Colonic mucosa (tissue), 4 donors: ENCODE measurements at regions of chr1 and their contacts with region 1.

Region 1: DNA sequence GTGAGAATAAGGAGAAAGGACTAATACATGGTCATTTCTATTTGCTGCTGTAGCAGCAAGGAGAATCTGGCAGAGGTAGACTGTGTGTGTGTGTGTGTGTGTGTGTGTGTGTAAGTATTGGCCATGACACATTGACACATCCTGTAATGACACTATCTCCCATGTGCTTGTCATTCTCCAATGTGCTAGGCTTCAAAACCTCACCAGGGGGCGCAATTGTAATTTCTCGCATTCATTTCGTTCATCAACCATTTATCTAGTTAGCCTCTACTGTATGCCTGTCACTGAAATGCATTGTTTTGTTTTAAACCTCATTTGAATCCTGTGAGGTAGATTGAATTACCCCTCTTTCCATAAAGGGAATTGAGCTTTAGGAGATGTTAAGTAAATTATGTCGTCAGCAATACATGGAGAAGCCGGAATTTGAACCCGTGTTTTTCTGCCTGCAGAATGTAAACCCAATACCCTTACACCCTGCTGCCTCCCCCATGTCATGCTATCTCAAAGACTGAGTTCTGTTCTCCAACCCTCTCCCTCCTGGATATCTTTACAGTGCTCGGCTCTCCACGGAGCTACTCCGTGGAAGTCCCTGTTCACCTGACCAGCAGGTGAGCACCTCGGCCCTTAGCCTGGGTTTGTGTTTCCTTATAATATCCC is 100.8 kb downstream of the UCK2 start:
- DNase-seq: peak; percentile 43
- H3K4me3 ChIP-seq: no peak overlapping the region
- H3K27ac ChIP-seq: no peak overlapping the region
- H3K4me1 ChIP-seq: no peaks in the 10 kb centered on the region
- H3K27me3 ChIP-seq: no peaks in the 10 kb centered on the region
- CTCF ChIP-seq: peak; percentile 48

Region 2: DNA sequence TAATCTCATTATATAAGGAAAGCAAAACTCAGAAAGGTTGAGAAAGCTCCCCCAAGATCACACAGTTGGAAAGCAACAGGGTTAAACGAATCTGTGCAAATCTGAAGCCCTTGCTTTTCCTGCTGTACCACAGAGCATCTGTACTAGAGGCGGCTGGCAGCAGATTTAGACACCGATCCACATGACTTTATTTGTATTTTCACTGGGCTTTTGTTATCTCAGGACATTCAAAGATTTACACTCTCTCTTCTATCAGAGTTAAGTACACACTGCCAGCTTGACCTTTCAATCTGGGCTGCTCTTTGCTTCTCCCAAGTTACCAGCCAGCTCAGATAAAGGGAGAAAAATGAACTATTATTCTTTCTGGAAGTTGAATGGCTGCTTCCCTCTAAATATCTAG is 92.0 kb after region 1 on chr1:
- intact Hi-C with region 1: no loop called
- DNase-seq: no peak
- H3K4me3 ChIP-seq: no peak overlapping the region
- H3K27ac ChIP-seq: no peak overlapping the region
- H3K4me1 ChIP-seq: no peaks in the 10 kb centered on the region
- H3K27me3 ChIP-seq: no peaks in the 10 kb centered on the region
- CTCF ChIP-seq: no peak

Region 3: GRCh38 chr1:166432655-166433054 is 504.5 kb after region 1 on chr1:
- intact Hi-C with region 1: loop called (anchors 10 kb)
- DNase-seq: no peak
- H3K4me3 ChIP-seq: no peak overlapping the region
- H3K27ac ChIP-seq: no peak overlapping the region
- H3K4me1 ChIP-seq: no peaks in the 10 kb centered on the region
- H3K27me3 ChIP-seq: no peaks in the 10 kb centered on the region
- CTCF ChIP-seq: no peak

Region 4: GRCh38 chr1:166479052-166479631 is 550.9 kb after region 1 on chr1:
- intact Hi-C with region 1: loop called (anchors 5 kb)
- DNase-seq: peak; percentile 60
- H3K4me3 ChIP-seq: no peak overlapping the region
- H3K27ac ChIP-seq: no peak overlapping the region
- H3K4me1 ChIP-seq: no peaks in the 10 kb centered on the region
- H3K27me3 ChIP-seq: no peaks in the 10 kb centered on the region
- CTCF ChIP-seq: peak; percentile 82